AG04449 (cell line): ENCODE measurements at regions of chr4 and their contacts with region 1.

Region 1: GRCh38 chr4:56641494-56642051 is 39.5 kb downstream of the HOPX start:
- DNase-seq: peak; percentile 78
- H3K4me3 ChIP-seq: no peak overlapping the region
- CTCF ChIP-seq: no peak

Region 2: DNA sequence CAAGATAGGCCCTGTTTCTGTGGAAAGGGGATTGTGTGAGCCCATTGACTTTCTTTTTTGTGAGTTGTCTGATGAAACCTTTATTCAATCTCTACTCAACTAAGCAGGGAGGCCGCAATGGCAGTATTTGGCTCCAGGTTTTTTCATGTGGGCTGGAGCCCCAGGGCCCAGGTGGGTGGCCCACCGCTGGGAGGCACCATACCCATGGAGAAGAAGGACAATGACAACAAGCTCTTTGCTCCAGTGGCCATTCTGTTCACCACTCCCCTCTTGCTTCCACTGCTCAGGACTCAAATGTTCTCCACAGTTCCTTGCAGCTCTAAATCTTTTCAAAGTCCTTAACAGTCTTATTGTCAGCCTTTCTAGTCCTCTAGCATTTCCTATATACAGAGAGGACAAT is 14.6 kb before region 1 on chr4:
- CTCF ChIA-PET with region 1: interaction called, 22 read pairs
- POLR2A ChIA-PET with region 1: interaction called, 3 read pairs
- DNase-seq: no peak
- H3K4me3 ChIP-seq: no peak overlapping the region
- CTCF ChIP-seq: no peak

Region 3: GRCh38 chr4:56655209-56655626 is 13.6 kb after region 1 on chr4:
- CTCF ChIA-PET with region 1: interaction called, 16 read pairs
- POLR2A ChIA-PET with region 1: interaction called, 5 read pairs
- DNase-seq: no peak
- H3K4me3 ChIP-seq: peak overlapping the region; percentile 59
- CTCF ChIP-seq: no peak

Region 4: DNA sequence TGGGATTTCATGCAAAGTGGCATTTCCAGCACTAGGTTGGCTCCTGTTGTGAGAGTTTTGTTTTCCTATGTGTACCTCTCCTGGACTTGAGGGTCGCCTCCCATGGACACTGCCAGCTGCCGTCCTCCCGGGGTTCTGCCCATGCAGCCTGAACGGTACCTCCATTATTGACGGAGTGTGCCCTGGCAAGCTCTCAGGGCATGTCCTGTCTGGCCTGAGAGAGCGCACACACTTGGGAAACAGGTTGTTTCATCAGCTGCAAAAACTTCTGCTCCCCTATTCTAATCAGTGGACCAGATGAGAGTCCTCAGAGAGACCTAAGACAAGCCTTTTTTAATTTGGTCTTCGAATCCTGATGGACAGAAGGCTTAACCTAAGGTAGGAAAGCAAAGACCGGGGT is 96.1 kb after region 1 on chr4:
- CTCF ChIA-PET with region 1: no interaction called
- POLR2A ChIA-PET with region 1: no interaction called
- DNase-seq: no peak
- H3K4me3 ChIP-seq: no peak overlapping the region
- CTCF ChIP-seq: no peak